ENCODE measurements at regions of chr1 and their contacts with region 1.

Region 1: GRCh38 chr1:16155532-16156410 is at the start of gene EPHA2:
- DNase-seq: peak; percentile 90
- H3K4me3 ChIP-seq: peak within 1 kb of the TSS; percentile 65 to 88 (median 87)
- H3K27ac ChIP-seq: peak within 1 kb of the TSS; percentile 84
- H3K4me1 ChIP-seq: peaks cover 42% of the 10 kb centered on the region
- H3K27me3 ChIP-seq: no peaks in the 10 kb centered on the region
- CTCF ChIP-seq: no peak
- POLR2A ChIP-seq: peak; percentile 99
- total RNA-seq, gene EPHA2: 125 and 141 TPM in 2 replicates

Region 2: GRCh38 chr1:16139473-16139962 is 16.3 kb before region 1 on chr1:
- CTCF ChIA-PET with region 1: interaction called, 38 read pairs
- POLR2A ChIA-PET with region 1: interaction called, 5 read pairs
- dilution Hi-C with region 1: no loop called
- intact Hi-C with region 1: loop called (anchors 1 kb)
- DNase-seq: peak; percentile 60
- H3K4me3 ChIP-seq: no peak overlapping the region
- H3K27ac ChIP-seq: peak overlapping the region; percentile 86
- H3K4me1 ChIP-seq: peaks cover 63% of the 10 kb centered on the region
- H3K27me3 ChIP-seq: no peaks in the 10 kb centered on the region
- CTCF ChIP-seq: no peak
- POLR2A ChIP-seq: peak; percentile 50

Region 3: DNA sequence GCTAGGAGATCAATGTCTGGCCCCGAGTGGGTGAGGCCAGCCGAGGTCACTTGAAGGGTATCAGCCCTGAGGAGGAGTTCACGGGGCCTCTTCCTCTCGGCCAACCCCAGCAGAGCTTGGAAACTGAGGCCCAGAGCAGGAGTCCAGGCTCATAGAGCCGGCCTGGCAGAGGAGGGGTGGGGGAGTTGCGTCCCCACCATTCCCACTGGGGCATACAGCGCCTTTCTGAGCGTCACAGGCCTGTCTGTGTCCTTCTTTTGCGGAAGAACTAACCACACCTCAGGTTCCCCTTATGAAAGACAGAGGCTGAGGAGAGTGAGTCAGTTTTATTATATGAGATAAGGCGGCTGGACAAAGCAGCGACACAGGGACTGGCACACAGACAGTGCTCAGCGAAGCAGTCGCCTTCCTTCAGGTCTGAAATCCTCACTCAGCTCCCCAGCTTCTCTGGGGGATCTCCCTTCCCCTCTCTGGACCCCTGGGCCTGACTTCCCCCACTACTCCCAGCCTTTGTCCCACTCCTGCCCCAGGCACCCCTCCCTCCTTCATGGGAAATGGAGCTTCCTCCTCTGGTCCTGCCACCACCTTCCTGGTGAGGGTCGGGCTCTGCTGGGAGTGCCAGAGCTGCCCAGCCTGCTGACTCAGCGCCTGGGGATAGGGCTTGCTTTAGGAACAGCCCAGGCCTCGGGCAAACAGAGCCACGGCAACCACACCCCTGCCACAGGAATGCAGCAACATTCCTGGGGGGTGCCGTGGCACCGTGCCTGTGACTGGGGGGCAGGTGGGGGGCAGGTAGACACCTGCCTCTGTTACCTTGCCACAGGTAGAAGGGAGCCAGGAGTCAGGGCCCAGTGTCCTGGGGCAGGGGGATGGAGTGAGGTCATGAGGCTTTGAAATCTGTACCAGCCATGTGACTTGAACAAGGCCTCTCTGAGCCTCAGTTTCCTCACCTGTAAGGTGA is 17.5 kb after region 1 on chr1:
- CTCF ChIA-PET with region 1: interaction called, 5 read pairs
- POLR2A ChIA-PET with region 1: interaction called, 13 read pairs
- dilution Hi-C with region 1: no loop called
- intact Hi-C with region 1: no loop called
- DNase-seq: peak; percentile 60
- H3K4me3 ChIP-seq: no peak overlapping the region
- H3K27ac ChIP-seq: peak overlapping the region; percentile 79
- H3K4me1 ChIP-seq: peaks cover 30% of the 10 kb centered on the region
- H3K27me3 ChIP-seq: no peaks in the 10 kb centered on the region
- CTCF ChIP-seq: no peak
- POLR2A ChIP-seq: peak; percentile 47

Region 4: GRCh38 chr1:16644193-16644481 is 488.4 kb after region 1 on chr1:
- CTCF ChIA-PET with region 1: no interaction called
- POLR2A ChIA-PET with region 1: no interaction called
- dilution Hi-C with region 1: no loop called
- intact Hi-C with region 1: no loop called
- DNase-seq: no peak
- H3K4me3 ChIP-seq: peak overlapping the region; percentile 46 to 82 (median 69)
- H3K27ac ChIP-seq: peak overlapping the region; percentile 45
- H3K4me1 ChIP-seq: peaks cover 8% of the 10 kb centered on the region
- H3K27me3 ChIP-seq: no peaks in the 10 kb centered on the region
- CTCF ChIP-seq: no peak
- POLR2A ChIP-seq: no peak